Gastrocnemius medialis (tissue), 4 donors: ENCODE measurements at regions of chr2 and their contacts with region 1.

Region 1: GRCh38 chr2:6922201-6922685 is 5.0 kb downstream of the RNF144A start:
- DNase-seq: no peak
- ATAC-seq: no peak
- H3K4me3 ChIP-seq: no peak overlapping the region
- H3K27ac ChIP-seq: no peak overlapping the region
- H3K4me1 ChIP-seq: peaks cover 21 to 29% of the 10 kb centered on the region in 2 donors
- H3K27me3 ChIP-seq: no peaks in the 10 kb centered on the region
- CTCF ChIP-seq: no peak
- POLR2A ChIP-seq: no peak

Region 2: DNA sequence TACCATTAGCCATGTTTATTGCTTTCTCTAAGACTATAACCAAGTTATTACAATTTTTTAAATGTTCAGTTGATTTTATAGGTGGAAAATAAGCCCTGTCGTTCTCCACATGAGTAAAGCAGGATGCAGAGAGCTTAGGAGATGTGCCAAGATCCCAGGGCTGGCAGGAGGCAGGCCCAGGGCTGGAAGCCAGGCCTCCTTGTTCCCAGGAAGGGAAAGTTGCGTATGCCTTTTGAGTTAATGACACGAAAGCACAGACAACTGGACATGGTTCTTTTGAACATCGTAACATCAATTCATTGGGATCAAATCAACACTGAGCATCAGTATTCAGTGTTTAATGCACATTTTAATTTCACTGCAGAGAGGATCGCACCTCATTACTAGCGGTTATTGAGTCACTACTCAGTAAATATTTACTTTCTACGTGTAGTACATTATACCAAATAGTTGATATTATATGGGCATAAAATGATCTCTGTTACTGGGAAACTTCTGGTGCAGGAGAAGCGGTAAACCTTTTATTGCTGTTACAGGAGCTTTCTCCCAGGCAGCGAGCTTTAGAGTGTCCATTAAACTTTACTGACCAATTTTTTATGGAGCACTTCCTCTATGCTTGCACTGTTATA is 55.0 kb after region 1 on chr2:
- in situ Hi-C with region 1: no loop called
- intact Hi-C with region 1: loop called (anchors 5 kb)
- DNase-seq: peak in 1 of 2 donors; percentile 68
- ATAC-seq: peak; percentile 56 to 61
- H3K4me3 ChIP-seq: no peak overlapping the region
- H3K27ac ChIP-seq: peak overlapping the region; percentile 28 to 45 (median 32)
- H3K4me1 ChIP-seq: peaks cover 13 to 27% of the 10 kb centered on the region in 2 donors
- H3K27me3 ChIP-seq: no peaks in the 10 kb centered on the region
- CTCF ChIP-seq: no peak
- POLR2A ChIP-seq: no peak

Region 3: GRCh38 chr2:6993229-6993640 is 71.0 kb after region 1 on chr2:
- in situ Hi-C with region 1: no loop called
- intact Hi-C with region 1: loop called (anchors 5 kb)
- DNase-seq: peak; percentile 49 to 60
- ATAC-seq: peak; percentile 71 to 74
- H3K4me3 ChIP-seq: no peak overlapping the region
- H3K27ac ChIP-seq: peak overlapping the region; percentile 59 to 73 (median 70)
- H3K4me1 ChIP-seq: peaks cover 24 to 32% of the 10 kb centered on the region in 2 donors
- H3K27me3 ChIP-seq: no peaks in the 10 kb centered on the region
- CTCF ChIP-seq: no peak
- POLR2A ChIP-seq: no peak